A673 (cell line): ENCODE measurements at regions of chr5 and their contacts with region 1.

Region 1: GRCh38 chr5:7850395-7851239 is at the start of gene CFAP90:
- DNase-seq: peak; percentile 25
- H3K4me3 ChIP-seq: peak within 1 kb of the TSS; percentile 41
- H3K27ac ChIP-seq: no peak within 1 kb of the TSS
- H3K4me1 ChIP-seq: peaks cover 3% of the 10 kb centered on the region
- H3K27me3 ChIP-seq: peaks cover 11% of the 10 kb centered on the region
- CTCF ChIP-seq: no peak
- total RNA-seq, gene CFAP90: not detected in 2 replicates

Region 2: GRCh38 chr5:7376871-7377270 is 473.7 kb before region 1 on chr5:
- CTCF ChIA-PET with region 1: interaction called, 12 read pairs
- POLR2A ChIA-PET with region 1: no interaction called
- intact Hi-C with region 1: no loop called
- DNase-seq: no peak
- H3K4me3 ChIP-seq: no peak overlapping the region
- H3K27ac ChIP-seq: no peak overlapping the region
- H3K4me1 ChIP-seq: peaks cover 22% of the 10 kb centered on the region
- H3K27me3 ChIP-seq: no peaks in the 10 kb centered on the region
- CTCF ChIP-seq: no peak